CD14-positive monocyte (primary cell): ENCODE measurements at regions of chr12 and their contacts with region 1.

Region 1: DNA sequence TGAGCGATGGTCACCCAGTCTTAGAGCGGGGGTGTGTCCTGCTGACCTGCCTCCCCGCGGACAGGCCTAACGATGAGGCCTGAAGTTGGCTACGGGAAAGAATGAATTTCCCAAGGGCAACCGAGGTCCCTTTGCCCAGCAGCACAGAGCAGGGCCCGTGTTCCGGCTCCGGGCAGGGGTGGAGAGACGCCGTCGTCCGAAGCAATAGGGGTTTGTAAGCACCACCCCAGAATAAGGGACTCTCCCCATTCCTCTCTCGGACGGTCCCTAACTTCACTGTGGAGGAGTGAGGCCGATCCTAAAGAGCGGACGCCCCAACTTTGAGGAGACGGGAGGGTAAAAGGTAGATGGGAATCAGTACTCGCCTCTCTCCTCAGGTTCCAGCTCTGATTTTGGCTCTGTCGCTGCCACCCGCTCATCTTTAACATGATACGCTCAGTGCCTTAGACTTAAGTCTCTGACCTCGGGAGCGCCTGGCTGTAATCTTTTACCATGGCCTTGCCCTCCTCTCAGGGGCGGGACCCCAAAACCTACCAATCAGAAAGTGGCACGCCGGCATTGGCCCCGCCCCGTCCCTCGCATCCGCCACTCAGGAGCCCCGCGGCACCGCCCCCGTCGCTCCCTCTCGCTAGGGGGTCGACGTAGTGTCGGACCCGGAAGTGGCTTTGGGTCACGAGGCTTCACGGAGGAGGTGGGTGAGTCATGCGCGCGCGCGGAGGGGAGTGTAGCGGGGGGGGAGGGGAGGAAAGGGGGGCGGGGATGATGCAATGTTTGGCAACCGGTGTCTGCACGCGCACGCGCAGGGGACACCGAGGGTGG is at the start of gene DDIT3:
- DNase-seq: peak; percentile 99 to 100 (median 99)
- H3K4me3 ChIP-seq: peak within 1 kb of the TSS; percentile 70 to 98 (median 89)
- H3K4me3 Mint-ChIP-seq: peak within 1 kb of the TSS; percentile 96 to 97
- H3K27ac ChIP-seq: peak within 1 kb of the TSS; percentile 98 to 99
- H3K27ac Mint-ChIP-seq: peak within 1 kb of the TSS; percentile 99 to 100 (median 99)
- H3K4me1 ChIP-seq: peaks cover 52 to 58% of the 10 kb centered on the region in 2 donors
- H3K4me1 Mint-ChIP-seq: peaks cover 51% of the 10 kb centered on the region
- H3K27me3 ChIP-seq: no peaks in the 10 kb centered on the region
- H3K27me3 Mint-ChIP-seq: peaks cover 0 to 1% (median 0%) of the 10 kb centered on the region in 3 donors
- CTCF ChIP-seq: no peak
- polyA plus RNA-seq, gene DDIT3: 9.3 to 163 (median 9.4) TPM

Region 2: DNA sequence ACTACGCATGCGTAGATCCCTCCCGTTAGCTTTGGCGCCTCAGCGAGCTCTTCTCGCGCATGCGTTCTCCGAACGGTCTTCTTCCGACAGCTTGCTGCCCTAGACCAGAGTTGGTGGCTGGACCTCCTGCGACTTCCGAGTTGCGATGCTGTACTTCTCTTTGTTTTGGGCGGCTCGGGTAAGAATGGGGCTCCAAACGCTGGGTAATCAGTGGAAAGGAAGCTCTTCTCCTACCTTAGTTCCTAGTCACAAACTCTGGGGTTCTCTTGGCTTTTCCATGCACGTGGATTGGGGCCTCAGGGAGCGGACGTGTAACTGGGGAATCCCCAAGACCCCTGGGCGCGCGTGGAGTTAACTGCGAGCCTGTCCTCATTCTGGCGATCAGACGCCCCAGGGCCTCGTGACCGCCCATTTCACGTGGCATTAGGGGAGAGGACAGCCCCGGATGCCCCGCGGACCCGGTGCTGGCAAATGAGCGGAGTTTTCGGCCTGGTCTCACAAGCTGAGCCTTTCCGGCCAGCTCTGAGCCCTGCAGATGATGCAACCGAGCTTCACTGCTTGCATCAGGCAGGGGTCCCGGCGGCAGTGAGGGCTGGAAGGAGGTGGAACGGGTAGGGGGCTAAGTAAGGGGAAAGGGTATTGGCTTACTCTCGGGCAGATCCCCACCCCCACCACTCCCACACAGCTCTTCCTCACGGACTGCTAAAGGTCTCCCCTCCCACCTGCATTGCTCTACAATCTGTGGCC is 290.5 kb before region 1 on chr12 and contains the start of gene SHMT2:
- intact Hi-C with region 1: no loop called
- DNase-seq: peak; percentile 92 to 99 (median 94)
- H3K4me3 ChIP-seq: peak within 1 kb of the TSS; percentile 33 to 91 (median 68)
- H3K4me3 Mint-ChIP-seq: peak within 1 kb of the TSS; percentile 90 to 95
- H3K27ac ChIP-seq: peak within 1 kb of the TSS; percentile 85 to 87
- H3K27ac Mint-ChIP-seq: peak within 1 kb of the TSS; percentile 93 to 99 (median 97)
- H3K4me1 ChIP-seq: peaks cover 41 to 63% of the 10 kb centered on the region in 2 donors
- H3K4me1 Mint-ChIP-seq: peaks cover 57% of the 10 kb centered on the region
- H3K27me3 ChIP-seq: peaks cover 25 to 32% of the 10 kb centered on the region in 2 donors
- H3K27me3 Mint-ChIP-seq: peaks cover 31 to 45% (median 42%) of the 10 kb centered on the region in 3 donors
- CTCF ChIP-seq: no peak
- polyA plus RNA-seq, gene SHMT2: 36.8 to 52.0 (median 39.8) TPM

Region 3: DNA sequence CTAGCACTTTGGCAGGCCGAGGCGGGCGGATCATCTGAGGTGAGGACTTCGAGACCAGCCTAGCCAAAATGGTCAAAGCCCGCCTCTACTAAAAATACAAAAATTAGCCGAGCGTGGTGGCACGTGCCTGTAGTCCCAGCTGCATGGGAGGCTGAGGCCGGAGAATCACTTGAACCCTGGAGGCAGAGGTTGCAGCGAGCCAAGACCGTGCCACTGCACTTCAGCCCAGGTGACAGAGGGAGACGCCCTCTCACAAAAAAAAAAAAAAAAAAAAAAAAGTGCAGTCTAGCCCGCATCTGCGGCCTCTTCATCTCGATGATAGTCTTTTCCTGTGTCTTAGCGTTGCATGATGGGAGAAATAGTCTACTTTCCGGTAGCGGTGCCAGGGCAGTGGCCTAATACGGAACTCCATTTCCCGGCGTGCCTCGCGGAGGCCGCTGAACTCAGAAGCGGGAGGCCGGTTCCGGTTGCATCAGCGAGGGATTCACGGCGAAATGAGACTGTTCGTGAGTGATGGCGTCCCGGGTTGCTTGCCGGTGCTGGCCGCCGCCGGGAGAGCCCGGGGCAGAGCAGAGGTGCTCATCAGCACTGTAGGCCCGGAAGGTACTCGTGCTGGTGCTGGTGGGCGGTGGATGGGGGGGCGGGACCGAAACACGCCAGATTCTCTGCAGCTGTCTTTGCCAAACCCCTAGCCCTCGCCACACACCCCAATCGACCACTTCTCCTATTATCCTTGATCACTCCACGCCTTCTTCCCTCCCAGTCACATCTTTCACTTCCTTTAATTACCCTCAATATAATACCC is 32.5 kb before region 1 on chr12 and contains the start of gene MARS1:
- intact Hi-C with region 1: loop called in 1 of 2 experiments (anchors 5 kb)
- DNase-seq: peak; percentile 91 to 94 (median 93)
- H3K4me3 ChIP-seq: peak within 1 kb of the TSS; percentile 79 to 92 (median 91)
- H3K4me3 Mint-ChIP-seq: peak within 1 kb of the TSS; percentile 86 to 93
- H3K27ac ChIP-seq: peak within 1 kb of the TSS; percentile 88 to 92
- H3K27ac Mint-ChIP-seq: peak within 1 kb of the TSS; percentile 83 to 97 (median 92)
- H3K4me1 ChIP-seq: peaks cover 16 to 21% of the 10 kb centered on the region in 2 donors
- H3K4me1 Mint-ChIP-seq: peaks cover 24% of the 10 kb centered on the region
- H3K27me3 ChIP-seq: no peaks in the 10 kb centered on the region
- H3K27me3 Mint-ChIP-seq: no peaks in the 10 kb centered on the region
- CTCF ChIP-seq: no peak
- polyA plus RNA-seq, gene MARS1: 63.5 to 164 (median 79.8) TPM

Region 4: DNA sequence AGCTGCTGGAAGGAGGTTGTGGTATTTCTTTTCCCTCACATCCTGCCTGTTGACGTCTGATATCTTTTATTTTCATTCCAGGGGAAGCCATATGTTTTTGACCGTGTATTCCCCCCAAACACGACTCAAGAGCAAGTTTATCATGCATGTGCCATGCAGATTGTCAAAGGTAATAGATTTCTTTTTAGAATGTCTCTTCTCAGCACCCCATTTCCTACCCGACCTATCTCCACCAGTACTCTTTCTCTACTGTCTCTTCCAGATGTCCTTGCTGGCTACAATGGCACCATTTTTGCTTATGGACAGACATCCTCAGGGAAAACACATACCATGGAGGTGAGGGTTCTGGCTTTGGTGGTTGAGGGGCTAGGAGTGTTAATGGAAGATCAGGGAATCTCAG is 43.1 kb after region 1 on chr12:
- intact Hi-C with region 1: no loop called
- DNase-seq: no peak
- H3K4me3 ChIP-seq: no peak overlapping the region
- H3K4me3 Mint-ChIP-seq: no peak overlapping the region
- H3K27ac ChIP-seq: no peak overlapping the region
- H3K27ac Mint-ChIP-seq: no peak overlapping the region
- H3K4me1 ChIP-seq: no peaks in the 10 kb centered on the region
- H3K4me1 Mint-ChIP-seq: no peaks in the 10 kb centered on the region
- H3K27me3 ChIP-seq: peaks cover 0 to 10% of the 10 kb centered on the region in 2 donors
- H3K27me3 Mint-ChIP-seq: peaks cover 16 to 27% (median 27%) of the 10 kb centered on the region in 3 donors
- CTCF ChIP-seq: no peak

Region 5: DNA sequence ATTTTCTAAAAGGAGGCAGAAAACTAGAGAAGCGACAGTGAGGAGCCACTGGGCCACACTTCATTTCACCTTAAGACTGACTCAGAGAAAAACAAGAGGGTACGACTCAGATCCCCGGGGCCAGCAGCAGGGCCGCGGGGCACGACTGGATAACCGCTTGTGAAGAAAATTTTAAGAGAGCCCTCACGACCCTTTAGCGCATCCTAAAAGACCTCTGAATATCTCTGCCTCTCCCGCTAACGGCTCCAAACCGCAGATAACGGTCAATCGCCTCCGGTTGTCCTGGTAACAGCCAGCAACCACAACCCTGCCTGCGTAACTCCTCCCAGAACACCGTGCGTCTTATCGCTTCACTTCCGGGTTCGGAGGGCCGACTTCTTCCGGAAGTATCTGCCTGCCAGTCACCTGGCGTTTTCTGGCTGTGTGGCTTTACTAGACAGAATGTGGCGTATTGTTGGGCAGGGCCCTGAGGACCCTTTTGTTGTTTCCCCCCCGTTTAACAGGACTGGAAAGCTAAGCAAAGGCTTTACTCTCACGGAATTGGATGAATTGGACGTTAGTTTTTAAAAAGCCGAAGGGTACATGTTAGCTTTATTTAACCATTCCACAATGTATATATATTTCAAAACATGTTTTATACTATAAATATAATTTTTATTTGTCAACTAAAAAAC is 415.7 kb after region 1 on chr12:
- intact Hi-C with region 1: loop called in 1 of 2 experiments (anchors 5 kb)
- DNase-seq: peak; percentile 81 to 94 (median 90)
- H3K4me3 ChIP-seq: peak overlapping the region; percentile 62 to 82 (median 71)
- H3K4me3 Mint-ChIP-seq: peak overlapping the region; percentile 93 to 97
- H3K27ac ChIP-seq: peak overlapping the region; percentile 72 to 91
- H3K27ac Mint-ChIP-seq: peak overlapping the region; percentile 96 to 99 (median 99)
- H3K4me1 ChIP-seq: peaks cover 43 to 62% of the 10 kb centered on the region in 2 donors
- H3K4me1 Mint-ChIP-seq: peaks cover 54% of the 10 kb centered on the region
- H3K27me3 ChIP-seq: no peaks in the 10 kb centered on the region
- H3K27me3 Mint-ChIP-seq: no peaks in the 10 kb centered on the region
- CTCF ChIP-seq: no peak